AG04449 (cell line): ENCODE measurements at regions of chr2 and their contacts with region 1.

Region 1: GRCh38 chr2:27016801-27017325 is 15.9 kb upstream of the TMEM214 start:
- DNase-seq: no peak
- H3K4me3 ChIP-seq: no peak overlapping the region
- CTCF ChIP-seq: peak; percentile 60

Region 2: DNA sequence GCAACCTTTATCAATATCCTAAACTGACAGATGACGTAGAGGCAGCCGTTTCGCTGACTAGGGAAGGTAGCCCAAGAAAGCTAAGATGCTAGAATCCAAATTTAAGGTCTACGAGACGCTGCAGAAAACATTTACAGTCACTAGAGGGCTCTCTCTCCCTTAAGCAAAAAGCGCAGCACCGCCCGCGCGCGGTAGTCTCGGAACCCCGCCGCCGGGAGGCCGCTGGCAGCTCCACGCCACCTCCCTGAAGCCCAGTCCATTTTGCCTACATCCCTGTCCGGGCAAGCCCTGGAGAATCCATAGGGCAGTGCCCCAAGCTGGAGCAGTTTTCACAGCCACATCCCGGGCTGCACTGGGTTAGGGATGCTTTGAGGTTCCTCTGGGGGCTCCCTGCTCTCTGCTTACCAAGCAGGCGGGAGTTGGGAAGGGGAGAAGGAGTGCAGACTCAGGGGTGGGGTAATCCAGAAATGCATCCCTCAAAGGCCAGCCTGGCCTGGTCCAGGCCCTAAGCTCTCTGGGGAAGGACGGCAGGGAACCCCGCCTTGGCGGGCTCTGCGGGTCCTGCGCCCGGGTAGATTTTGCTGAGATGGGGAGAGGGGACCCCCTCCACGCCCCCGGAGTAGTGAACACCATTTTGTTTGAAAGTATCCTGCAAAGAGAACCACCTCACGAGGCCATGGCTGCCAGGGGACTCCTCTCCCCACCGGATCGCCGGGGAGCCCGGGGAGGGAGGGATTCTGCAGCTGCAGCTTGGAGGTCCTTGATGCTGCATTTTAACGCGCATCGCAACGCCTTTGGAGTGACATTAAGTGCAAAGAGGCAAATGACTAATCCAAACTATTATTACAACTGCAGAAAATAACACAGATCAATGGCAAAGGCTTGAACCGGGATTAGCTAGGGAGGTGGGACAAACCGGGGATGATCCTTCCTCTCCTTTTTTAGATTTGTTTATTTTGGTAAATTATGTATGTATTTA is 170.2 kb before region 1 on chr2:
- CTCF ChIA-PET with region 1: interaction called, 110 read pairs
- POLR2A ChIA-PET with region 1: no interaction called
- DNase-seq: peak; percentile 3
- H3K4me3 ChIP-seq: no peak overlapping the region
- CTCF ChIP-seq: peak; percentile 76

Region 3: DNA sequence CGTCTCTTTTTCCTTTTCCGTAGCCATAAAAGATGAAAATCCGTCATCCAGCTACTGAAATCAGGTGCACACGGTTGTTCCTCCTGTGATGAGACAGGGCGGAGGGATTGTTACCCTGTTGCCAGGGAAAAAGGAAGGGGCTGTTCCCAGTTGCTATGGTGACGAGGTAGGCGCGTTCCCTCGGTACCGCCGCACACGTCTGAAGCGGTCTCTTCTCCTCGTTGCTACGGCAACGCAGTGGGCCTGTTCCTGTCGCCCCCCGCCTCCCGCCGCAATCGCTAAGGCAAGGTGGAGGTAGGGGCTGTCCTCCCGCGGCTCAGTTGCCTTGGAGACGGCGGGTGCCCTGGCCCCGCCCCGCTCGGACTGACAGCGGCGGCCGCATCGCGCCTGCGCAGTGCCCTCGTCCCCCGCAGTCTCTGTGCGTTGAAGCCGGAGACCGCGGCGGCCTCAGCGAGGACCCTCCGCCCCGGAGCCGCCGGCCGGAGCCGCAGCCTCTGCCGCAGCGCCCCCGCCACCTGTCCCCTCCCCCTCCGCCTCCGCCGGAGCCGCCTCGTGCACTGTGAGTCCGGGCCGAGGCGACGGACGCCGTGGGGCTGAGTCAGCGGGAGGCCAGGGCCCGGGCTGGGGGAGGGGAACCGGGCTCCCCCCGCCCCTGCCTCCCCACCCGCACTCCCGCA is 46.5 kb before region 1 on chr2 and contains the start of gene MAPRE3:
- CTCF ChIA-PET with region 1: interaction called, 663 read pairs
- POLR2A ChIA-PET with region 1: no interaction called
- DNase-seq: no peak
- H3K4me3 ChIP-seq: peak within 1 kb of the TSS; percentile 88
- CTCF ChIP-seq: no peak

Region 4: DNA sequence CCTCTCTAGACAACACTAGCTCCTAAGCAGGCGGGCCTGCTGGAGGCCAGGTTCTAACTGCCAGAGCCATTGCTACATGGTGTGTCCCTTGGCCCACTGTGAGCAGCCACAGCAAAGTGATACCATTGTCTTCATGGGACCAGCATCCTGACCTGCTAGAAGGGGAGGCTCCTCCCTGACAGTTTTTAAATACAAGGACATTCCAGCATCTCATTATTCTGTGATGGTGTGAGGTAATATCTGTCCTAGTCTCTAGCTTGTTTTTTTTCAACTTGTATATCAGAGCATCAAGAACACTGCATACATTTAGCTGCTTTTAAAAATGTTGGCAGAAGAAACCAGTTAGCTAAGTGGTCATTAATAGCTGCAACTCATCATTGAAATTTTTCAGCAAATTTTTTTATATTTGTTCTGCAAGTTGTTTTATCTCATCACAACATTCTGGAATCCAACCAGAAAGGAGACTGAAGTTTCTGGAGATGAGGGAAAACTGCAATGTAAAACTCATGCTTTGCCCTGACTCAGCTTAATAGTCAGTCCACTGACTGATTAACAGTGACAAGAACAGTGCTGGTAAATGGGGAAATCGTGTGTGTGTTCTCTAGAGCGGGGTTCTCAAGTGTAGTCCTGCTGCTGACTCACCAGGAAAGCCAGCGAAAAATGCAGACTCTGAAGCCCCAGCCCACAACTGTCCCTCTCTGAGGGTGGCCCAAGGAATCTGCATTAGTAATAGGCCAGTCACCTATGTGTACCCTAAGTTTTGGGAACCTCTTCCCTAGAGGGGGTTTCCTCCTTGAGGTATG is 28.6 kb before region 1 on chr2:
- CTCF ChIA-PET with region 1: interaction called, 39 read pairs
- POLR2A ChIA-PET with region 1: no interaction called
- DNase-seq: peak; percentile 33
- H3K4me3 ChIP-seq: no peak overlapping the region
- CTCF ChIP-seq: no peak

Region 5: DNA sequence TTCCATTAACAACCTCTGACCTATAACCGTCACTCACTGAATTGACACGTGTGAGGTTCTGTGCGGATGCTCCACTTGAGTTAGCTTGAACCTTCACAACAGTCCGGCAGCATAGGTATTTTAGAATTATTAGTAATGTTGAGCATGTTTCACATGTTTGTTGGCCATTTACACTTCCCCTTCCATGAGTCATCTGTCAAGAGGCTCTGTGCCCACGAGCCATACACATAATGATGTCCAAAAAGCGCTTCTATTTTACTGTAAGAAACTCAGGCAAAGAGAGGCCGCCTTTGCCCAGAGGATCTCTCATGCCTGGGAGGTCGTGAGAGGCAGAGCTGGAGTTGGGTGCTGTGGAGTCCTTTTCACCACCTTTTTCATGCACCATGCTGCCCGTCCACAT is 13.0 kb before region 1 on chr2:
- CTCF ChIA-PET with region 1: interaction called, 39 read pairs
- POLR2A ChIA-PET with region 1: no interaction called
- DNase-seq: no peak
- H3K4me3 ChIP-seq: no peak overlapping the region
- CTCF ChIP-seq: no peak

Region 6: DNA sequence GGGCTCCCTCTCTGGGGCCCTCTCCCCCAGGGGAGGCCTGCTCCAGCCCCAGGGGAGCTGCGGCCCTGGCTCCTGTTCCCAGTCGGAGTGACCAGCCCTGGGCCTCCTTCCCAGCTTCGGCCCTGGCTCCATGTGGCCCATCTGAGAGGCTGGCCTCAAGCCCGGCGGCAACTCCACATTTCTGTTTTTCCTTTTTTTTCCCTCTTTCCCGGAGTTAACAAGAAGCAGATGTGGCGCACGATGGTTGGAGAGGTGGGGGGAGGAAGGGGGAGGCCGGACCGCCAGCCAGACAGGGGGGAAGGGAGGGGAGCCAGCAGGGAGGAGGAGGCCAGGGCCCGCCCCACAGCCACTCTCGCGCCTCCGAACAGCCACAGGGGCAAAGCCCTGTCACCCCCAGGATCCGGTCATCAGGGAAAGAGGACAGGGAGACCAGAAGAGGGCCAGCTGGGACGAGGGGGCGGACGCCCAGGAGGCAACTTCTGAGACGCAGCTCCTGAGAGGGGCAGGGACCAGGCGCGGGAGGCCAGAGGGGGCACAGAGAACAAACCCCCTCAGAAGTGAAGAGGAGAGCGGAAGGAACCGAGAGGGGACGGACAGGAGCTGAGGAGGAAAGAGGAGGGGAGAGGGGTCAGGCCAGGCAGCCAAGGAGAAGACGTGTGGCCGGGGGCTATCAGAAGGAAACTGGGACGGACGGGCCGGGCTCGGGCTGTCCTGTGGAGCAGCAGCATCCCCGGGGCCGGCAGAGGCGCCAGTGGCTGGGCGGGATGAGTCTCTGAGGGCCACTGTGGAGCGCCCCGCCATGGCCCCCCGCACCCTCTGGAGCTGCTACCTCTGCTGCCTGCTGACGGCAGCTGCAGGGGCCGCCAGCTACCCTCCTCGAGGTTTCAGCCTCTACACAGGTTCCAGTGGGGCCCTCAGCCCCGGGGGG is 61.7 kb after region 1 on chr2 and contains the start of gene EMILIN1:
- CTCF ChIA-PET with region 1: interaction called, 11 read pairs
- POLR2A ChIA-PET with region 1: no interaction called
- DNase-seq: peak; percentile 83
- H3K4me3 ChIP-seq: peak within 1 kb of the TSS; percentile 95
- CTCF ChIP-seq: peak; percentile 8

Region 7: DNA sequence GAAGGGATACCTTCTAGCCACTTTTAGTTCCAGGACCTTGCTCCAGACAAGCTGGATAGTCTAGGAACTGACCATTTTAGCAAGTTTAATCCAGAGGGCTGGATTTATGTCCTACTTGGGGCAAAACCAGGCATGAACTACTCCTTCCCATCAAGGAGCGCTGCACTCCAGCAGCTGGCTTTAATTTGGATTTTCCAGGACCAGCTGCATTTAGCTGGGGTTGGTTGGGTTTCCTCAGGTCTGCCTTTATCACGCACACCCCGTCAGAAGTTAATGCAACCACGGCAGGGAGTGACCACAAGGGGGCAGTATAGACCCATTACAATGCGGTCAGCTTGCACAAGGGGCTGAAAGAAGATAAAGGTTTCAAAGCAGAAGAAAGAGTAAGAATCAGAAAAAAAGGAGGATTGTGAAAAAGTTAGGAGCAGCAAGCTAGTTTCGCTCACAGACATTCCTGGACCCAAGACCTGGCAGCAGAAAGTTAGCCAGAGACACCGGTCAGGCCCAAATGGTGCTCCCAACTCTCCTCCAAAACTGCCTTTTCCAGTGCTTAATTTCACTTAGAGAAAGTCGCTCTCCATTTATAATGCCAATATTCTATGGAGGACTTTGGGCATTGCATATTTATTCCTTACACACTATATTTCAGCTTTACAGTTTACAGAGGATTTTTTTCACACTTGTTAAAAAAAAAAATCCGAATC is 686.9 kb after region 1 on chr2:
- CTCF ChIA-PET with region 1: no interaction called
- POLR2A ChIA-PET with region 1: no interaction called
- DNase-seq: peak; percentile 82
- H3K4me3 ChIP-seq: no peak overlapping the region
- CTCF ChIP-seq: peak; percentile 79